Activated naive CD4-positive, alpha-beta T cell treated with anti-CD3 and anti-CD28 coated beads for 36 hours (primary cell): ENCODE measurements at regions of chr6 and their contacts with region 1.

Region 1: GRCh38 chr6:137313928-137314855 is 95.0 kb upstream of the IFNGR1 start:
- DNase-seq: peak; percentile 84
- H3K4me3 Mint-ChIP-seq: no peak overlapping the region
- H3K27ac Mint-ChIP-seq: no peak overlapping the region
- H3K4me1 Mint-ChIP-seq: peaks cover 2% of the 10 kb centered on the region
- H3K27me3 Mint-ChIP-seq: no peaks in the 10 kb centered on the region

Region 2: DNA sequence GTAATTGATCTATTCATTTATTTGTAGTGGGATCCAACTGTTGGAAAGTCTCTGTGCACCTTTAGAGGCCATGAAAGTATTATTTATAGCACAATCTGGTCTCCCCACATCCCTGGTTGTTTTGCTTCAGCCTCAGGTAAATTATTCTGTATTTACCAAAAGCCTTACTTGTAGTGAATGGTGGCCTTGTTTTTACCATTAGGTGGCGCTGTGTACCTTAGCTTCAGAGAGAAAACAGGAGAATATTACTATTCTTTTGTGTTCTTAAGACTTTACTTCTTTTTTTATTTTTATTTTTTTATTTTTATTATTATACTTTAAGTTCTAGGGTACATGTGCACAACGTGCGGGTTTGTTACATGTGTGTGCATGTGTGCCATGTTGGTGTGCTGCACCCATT is 468.1 kb before region 1 on chr6:
- CTCF ChIA-PET with region 1: no interaction called
- intact Hi-C with region 1: loop called (anchors 1 kb)
- DNase-seq: peak; percentile 52
- H3K4me3 Mint-ChIP-seq: no peak overlapping the region
- H3K27ac Mint-ChIP-seq: no peak overlapping the region
- H3K4me1 Mint-ChIP-seq: no peaks in the 10 kb centered on the region
- H3K27me3 Mint-ChIP-seq: no peaks in the 10 kb centered on the region

Region 3: GRCh38 chr6:136967876-136968752 is 346.1 kb before region 1 on chr6:
- CTCF ChIA-PET with region 1: no interaction called
- intact Hi-C with region 1: loop called (anchors 1 kb)
- DNase-seq: peak; percentile 80
- H3K4me3 Mint-ChIP-seq: no peak overlapping the region
- H3K27ac Mint-ChIP-seq: no peak overlapping the region
- H3K4me1 Mint-ChIP-seq: no peaks in the 10 kb centered on the region
- H3K27me3 Mint-ChIP-seq: peaks cover 10% of the 10 kb centered on the region

Region 4: DNA sequence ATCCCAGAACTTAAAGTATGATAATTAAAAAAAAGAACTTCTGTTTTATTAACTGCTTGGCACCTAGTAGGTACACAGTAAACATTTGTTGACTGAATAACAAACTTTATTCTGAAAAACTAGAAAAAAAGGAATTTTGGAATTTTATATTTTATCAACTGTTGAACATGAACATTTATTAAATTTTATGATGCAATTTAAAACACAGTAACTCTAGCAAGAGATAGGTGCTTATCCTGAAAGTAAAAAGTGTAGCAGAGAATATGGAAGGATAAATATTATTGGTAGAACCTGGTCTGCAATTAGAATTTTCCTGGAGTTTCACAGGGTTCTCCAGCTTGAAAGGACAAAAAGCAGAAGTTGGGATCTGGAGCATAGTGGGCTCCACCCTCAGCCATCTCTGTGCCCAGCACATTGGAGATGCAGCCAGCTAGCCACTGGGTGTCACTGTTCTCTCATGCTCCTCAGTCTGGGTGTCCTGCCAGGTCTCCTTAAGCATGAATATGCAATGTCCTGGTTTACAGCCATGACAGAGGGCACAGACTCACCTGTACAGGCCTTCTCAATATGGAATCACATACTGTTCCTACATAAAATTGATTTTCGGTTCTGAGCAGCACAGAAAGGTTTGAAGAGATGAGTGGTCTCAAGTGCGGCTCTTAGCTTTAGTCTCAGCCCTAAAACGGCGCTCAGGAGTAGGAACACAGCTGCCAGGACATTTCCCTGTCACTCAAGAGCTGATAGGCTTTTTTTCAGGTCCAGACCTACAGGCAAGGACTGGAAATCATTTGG is 237.7 kb before region 1 on chr6:
- CTCF ChIA-PET with region 1: interaction called, 14 read pairs
- intact Hi-C with region 1: loop called (anchors 1 kb)
- DNase-seq: peak; percentile 79
- H3K4me3 Mint-ChIP-seq: no peak overlapping the region
- H3K27ac Mint-ChIP-seq: no peak overlapping the region
- H3K4me1 Mint-ChIP-seq: no peaks in the 10 kb centered on the region
- H3K27me3 Mint-ChIP-seq: peaks cover 20% of the 10 kb centered on the region

Region 5: DNA sequence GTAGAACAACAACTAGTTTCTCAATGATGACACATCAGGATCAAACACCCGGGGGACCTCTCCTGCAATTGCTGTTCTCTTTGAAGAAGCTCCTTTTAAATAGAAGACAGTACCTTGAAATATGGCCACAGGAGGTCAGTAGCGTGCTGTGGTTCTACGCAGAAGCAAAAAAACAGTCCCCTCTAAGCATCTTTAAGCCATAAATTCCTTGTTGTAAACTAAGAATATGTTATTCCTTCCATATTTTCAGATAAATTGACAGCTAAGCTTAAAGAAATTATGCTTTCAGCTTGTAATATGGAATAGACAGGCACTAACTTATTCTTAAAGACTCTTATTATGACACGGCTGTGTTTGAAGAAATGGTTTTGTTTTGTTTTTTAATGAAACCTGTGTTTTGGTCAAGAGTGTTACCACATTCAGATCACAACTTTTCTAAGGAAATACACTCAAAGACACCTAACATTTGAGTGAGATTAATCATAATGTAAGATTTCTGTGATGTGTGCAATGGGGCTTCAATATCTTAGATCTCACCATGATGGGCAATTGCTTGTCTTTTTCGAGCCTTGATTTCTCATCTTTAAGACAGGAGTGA is 219.7 kb before region 1 on chr6:
- CTCF ChIA-PET with region 1: interaction called, 18 read pairs
- intact Hi-C with region 1: loop called (anchors 1 kb)
- DNase-seq: peak; percentile 75
- H3K4me3 Mint-ChIP-seq: no peak overlapping the region
- H3K27ac Mint-ChIP-seq: no peak overlapping the region
- H3K4me1 Mint-ChIP-seq: peaks cover 13% of the 10 kb centered on the region
- H3K27me3 Mint-ChIP-seq: peaks cover 3% of the 10 kb centered on the region

Region 6: DNA sequence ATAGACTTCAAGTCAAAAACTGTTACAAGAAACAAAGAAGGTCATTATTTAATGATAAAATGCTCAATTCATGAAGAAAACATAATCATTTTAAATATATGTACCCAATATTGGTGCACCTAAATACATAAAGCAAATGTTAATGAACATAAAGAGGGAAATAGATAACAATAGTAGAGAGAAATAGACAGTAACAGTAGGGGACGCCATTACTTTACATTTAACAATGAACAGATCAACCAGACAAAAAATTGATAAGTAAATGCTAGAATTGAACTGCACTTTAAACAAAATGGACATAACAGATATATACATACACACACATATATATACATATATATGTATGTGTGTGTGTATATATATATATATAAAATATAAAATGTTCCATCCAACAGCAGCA is 178.1 kb before region 1 on chr6:
- CTCF ChIA-PET with region 1: no interaction called
- intact Hi-C with region 1: loop called (anchors 1 kb)
- DNase-seq: no peak
- H3K4me3 Mint-ChIP-seq: no peak overlapping the region
- H3K27ac Mint-ChIP-seq: no peak overlapping the region
- H3K4me1 Mint-ChIP-seq: no peaks in the 10 kb centered on the region
- H3K27me3 Mint-ChIP-seq: peaks cover 5% of the 10 kb centered on the region

Region 7: GRCh38 chr6:137271245-137272183 is 42.7 kb before region 1 on chr6:
- CTCF ChIA-PET with region 1: interaction called, 6 read pairs
- intact Hi-C with region 1: loop called (anchors 1 kb)
- DNase-seq: no peak
- H3K4me3 Mint-ChIP-seq: no peak overlapping the region
- H3K27ac Mint-ChIP-seq: no peak overlapping the region
- H3K4me1 Mint-ChIP-seq: no peaks in the 10 kb centered on the region
- H3K27me3 Mint-ChIP-seq: peaks cover 9% of the 10 kb centered on the region

Region 8: GRCh38 chr6:137387096-137387764 is 73.0 kb after region 1 on chr6:
- CTCF ChIA-PET with region 1: no interaction called
- intact Hi-C with region 1: no loop called
- DNase-seq: no peak
- H3K4me3 Mint-ChIP-seq: no peak overlapping the region
- H3K27ac Mint-ChIP-seq: no peak overlapping the region
- H3K4me1 Mint-ChIP-seq: peaks cover 39% of the 10 kb centered on the region
- H3K27me3 Mint-ChIP-seq: no peaks in the 10 kb centered on the region